Posterior vena cava (tissue), 2 donors: ENCODE measurements at regions of chr2 and their contacts with region 1.

Region 1: GRCh38 chr2:220460257-220460985 is 833.0 kb downstream of the SLC4A3 start:
- DNase-seq: no peak

Region 2: GRCh38 chr2:220628252-220628651 is 167.8 kb after region 1 on chr2:
- intact Hi-C with region 1: loop called in 1 of 2 experiments (anchors 5 kb)
- DNase-seq: no peak